ENCODE measurements at regions of chr2 and their contacts with region 1.

Region 1: GRCh38 chr2:154637456-154637855 is 61.0 kb upstream of the KCNJ3 start:
- DNase-seq: no peak
- H3K4me3 ChIP-seq: no peak overlapping the region
- H3K27ac ChIP-seq: no peak overlapping the region
- H3K4me1 ChIP-seq: no peaks in the 10 kb centered on the region
- H3K27me3 ChIP-seq: no peaks in the 10 kb centered on the region
- CTCF ChIP-seq: no peak
- EP300 ChIP-seq: no peak
- POLR2A ChIP-seq: no peak

Region 2: DNA sequence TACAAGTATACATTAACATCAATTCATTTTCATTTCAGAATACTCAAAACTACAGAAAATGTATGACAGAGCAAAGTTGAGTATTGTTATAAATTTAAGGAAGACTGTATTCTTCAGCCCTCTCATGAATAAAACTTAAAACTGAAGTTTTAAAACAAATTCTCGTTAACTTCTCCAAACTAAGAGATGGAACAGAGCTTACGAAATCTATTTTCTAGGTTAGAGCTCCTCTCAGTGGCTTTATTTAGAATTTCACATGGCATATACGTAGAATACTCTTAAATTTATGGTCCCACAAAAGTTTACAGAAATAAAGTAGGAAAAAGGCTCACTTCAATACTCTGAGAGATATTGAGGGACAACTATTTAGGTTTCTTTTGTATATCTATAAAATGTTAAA is 673.1 kb after region 1 on chr2:
- in situ Hi-C with region 1: loop called in 1 of 4 experiments (anchors 25 kb)
- intact Hi-C with region 1: no loop called
- DNase-seq: no peak
- H3K4me3 ChIP-seq: no peak overlapping the region
- H3K27ac ChIP-seq: no peak overlapping the region
- H3K4me1 ChIP-seq: no peaks in the 10 kb centered on the region
- H3K27me3 ChIP-seq: no peaks in the 10 kb centered on the region
- CTCF ChIP-seq: peak; percentile 9 to 37 (median 27)
- EP300 ChIP-seq: no peak
- POLR2A ChIP-seq: no peak

Measured in transverse colon (tissue), 4 donors.